ENCODE measurements at regions of chr6 and their contacts with region 1.

Region 1: GRCh38 chr6:27503436-27504030 is 30.6 kb upstream of the ZNF184 start:
- DNase-seq: peak; percentile 60
- H3K4me3 Mint-ChIP-seq: peak overlapping the region; percentile 90
- H3K27ac Mint-ChIP-seq: peak overlapping the region; percentile 82
- H3K4me1 Mint-ChIP-seq: peaks cover 32% of the 10 kb centered on the region
- H3K27me3 Mint-ChIP-seq: peaks cover 42% of the 10 kb centered on the region

Region 2: DNA sequence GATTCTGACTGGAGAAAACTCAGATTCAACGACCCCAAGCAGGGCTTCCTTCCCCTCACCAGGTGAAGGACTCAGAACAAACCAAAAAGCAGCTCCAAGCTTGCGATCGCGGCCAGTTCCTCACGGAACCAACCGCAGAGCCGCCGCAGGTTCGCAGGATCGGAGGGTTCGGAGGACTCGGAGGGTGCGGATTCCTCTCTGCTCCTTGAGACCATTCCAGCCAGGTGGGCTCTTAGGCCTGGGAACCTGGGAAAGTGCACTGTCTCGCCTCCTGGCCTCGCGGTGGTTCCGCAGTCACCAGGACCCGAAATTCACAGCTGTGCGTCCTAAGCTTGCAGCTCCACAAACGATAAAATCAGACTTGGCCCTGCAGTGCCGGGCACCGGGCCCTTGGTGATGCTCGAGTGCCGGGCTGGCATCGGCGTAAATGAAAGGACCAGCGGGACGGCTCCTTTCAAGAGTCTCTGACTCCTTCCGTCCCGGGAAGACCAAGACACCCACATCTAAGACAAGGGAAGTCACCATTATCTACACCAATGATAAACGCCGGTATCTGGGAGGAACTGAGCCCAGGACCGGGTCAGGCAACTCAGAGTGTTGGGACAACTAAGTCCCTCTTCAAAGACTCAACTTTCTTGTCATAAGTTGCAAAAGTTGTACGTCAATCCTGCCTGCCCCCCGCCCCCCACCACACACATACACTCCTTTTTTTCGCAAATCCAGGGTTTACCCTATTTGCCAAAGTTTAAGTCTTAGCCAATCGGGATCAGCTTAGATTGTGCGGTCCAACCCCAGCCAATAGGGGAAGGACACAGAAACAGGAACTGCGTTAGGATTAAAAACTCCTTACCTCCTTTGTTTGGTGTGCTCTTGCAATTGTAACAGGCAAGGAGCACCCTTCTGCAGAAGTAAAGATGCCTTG is 325.8 kb before region 1 on chr6:
- intact Hi-C with region 1: loop called (anchors 2 kb)
- DNase-seq: peak; percentile 66
- H3K4me3 Mint-ChIP-seq: peak overlapping the region; percentile 95
- H3K27ac Mint-ChIP-seq: peak overlapping the region; percentile 93
- H3K4me1 Mint-ChIP-seq: peaks cover 7% of the 10 kb centered on the region
- H3K27me3 Mint-ChIP-seq: peaks cover 36% of the 10 kb centered on the region

Region 3: GRCh38 chr6:27312146-27312949 is 191.2 kb before region 1 on chr6 and contains the start of gene POM121L2:
- intact Hi-C with region 1: loop called (anchors 1 kb)
- DNase-seq: peak; percentile 41
- H3K4me3 Mint-ChIP-seq: peak within 1 kb of the TSS; percentile 78
- H3K27ac Mint-ChIP-seq: no peak within 1 kb of the TSS
- H3K4me1 Mint-ChIP-seq: peaks cover 7% of the 10 kb centered on the region
- H3K27me3 Mint-ChIP-seq: peaks cover 65% of the 10 kb centered on the region
- total RNA-seq, gene POM121L2: not detected in 2 replicates

Region 4: DNA sequence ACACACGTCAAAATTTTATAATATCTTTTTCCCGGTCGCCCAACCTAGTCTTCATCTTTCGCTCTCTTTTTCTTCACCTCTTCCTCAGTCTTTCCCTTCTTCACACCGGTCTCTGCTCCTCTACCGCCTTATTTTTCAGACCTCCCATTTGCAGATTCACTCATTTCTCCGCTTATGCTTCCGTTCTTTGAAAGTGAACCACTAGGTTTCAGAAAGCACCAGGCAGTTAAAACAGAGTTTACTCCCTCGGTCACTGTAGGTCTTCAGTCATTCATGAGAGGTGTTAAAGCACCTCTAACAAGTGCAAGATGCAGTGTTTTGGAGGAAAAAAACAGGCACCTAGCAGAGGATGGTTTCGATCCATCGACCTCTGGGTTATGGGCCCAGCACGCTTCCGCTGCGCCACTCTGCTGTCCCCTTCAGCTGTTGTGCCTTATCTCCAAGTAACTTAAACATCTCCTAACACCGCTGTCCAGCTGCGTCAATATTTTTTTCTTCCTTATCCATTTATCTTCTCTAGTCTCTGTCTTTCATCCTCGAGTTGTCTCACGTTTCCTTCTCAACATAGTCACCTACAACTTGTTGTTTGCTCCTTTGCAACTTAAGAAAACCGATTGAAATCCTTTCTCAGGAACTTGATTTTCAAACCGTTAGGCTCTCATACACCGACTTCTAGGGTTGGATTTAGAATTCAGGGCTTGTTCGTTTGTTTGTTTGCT is 89.1 kb after region 1 on chr6:
- intact Hi-C with region 1: loop called (anchors 5 kb)
- DNase-seq: peak; percentile 51
- H3K4me3 Mint-ChIP-seq: no peak overlapping the region
- H3K27ac Mint-ChIP-seq: no peak overlapping the region
- H3K4me1 Mint-ChIP-seq: peaks cover 6% of the 10 kb centered on the region
- H3K27me3 Mint-ChIP-seq: peaks cover 24% of the 10 kb centered on the region